OCI-LY7 (cell line): ENCODE measurements at regions of chr16 and their contacts with region 1.

Region 1: DNA sequence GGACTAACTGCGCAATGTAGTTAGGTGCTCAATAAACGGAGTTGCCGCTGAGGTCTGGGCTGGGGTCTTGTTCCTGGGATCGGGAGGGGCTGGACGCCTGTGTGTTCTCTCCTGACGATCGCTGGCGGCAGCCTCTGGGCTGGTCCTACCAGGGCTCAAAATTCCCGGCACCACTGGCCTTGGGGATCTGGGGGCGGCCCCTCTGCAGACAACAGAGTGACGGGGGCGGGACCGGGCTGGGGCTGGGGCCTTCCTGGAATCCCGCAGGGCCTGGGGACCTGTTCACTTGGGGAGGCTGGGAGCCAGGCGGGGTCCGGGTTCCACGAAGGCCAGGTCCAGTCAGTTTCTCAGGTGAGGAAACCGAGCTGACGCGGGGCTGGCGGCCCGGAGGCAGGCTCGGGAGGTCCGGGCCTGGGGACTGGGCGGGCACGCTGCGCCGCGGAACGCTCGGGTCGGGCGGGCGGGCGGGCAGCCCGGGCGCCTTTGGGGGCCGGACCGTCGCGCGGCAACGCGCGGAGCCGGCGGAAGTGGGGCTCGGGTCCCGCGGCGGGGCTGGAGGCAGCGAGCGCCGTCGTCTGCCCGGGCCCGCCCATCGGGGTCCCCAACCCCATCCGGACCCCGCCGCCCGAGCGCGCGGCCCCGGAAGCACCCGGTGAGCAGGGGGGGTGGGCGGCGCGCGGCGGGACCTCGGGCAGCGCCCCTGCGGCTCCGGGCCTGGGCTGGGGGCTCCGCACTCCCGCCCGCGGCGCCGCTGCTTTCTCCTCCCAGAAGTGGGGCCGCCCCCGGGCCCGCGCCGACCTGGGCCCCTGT is at the start of gene PIGQ:
- DNase-seq: peak; percentile 79
- H3K4me3 ChIP-seq: peak within 1 kb of the TSS; percentile 94
- H3K27ac ChIP-seq: peak within 1 kb of the TSS; percentile 22
- H3K4me1 ChIP-seq: peaks cover 35% of the 10 kb centered on the region
- CTCF ChIP-seq: no peak
- total RNA-seq, gene PIGQ: 32.3 and 39.0 TPM in 2 replicates

Region 2: DNA sequence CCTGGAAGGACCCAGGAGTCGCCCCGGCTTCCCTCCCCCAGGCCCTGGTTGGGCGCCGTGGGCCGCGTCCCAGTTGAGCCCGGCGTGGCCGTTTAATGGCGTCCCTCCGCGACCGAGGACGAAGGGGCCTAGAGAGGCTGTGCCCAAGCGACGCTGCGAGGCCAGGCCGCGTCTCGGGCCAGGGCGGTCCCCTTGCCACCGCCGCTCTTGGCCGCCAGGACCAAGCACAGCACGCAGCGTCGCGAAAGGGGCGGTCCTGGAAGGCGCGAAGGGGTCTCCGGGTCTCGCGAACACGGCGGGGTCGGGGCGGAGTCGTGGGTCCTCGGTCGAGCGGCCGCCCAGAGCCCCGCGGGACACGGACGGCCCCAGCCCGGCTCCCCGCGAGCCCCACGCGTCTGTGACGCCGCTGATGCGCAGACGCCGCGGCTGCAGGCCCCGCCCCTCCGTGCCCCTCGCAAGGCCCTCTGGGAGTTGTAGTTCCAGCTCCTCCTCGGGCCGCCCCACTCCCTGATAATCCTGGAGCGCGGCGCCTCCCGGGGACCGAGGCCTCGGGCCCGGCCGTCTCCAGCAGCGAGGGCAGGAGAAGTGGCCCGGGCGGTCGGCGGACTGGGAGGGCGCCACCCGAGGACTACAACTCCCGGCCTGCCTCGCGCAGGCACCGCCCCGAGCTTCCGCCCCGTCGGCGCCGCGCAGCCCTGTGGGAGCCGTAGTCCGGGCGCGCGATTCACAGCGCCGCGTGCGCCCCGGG is 42.5 kb before region 1 on chr16 and contains the start of gene CAPN15:
- CTCF ChIA-PET with region 1: no interaction called
- POLR2A ChIA-PET with region 1: no interaction called
- intact Hi-C with region 1: loop called (anchors 1 kb)
- DNase-seq: peak; percentile 92
- H3K4me3 ChIP-seq: peak within 1 kb of the TSS; percentile 92
- H3K27ac ChIP-seq: peak within 1 kb of the TSS; percentile 49
- H3K4me1 ChIP-seq: peaks cover 24% of the 10 kb centered on the region
- CTCF ChIP-seq: no peak
- total RNA-seq, gene CAPN15: 23.1 and 32.9 TPM in 2 replicates

Region 3: DNA sequence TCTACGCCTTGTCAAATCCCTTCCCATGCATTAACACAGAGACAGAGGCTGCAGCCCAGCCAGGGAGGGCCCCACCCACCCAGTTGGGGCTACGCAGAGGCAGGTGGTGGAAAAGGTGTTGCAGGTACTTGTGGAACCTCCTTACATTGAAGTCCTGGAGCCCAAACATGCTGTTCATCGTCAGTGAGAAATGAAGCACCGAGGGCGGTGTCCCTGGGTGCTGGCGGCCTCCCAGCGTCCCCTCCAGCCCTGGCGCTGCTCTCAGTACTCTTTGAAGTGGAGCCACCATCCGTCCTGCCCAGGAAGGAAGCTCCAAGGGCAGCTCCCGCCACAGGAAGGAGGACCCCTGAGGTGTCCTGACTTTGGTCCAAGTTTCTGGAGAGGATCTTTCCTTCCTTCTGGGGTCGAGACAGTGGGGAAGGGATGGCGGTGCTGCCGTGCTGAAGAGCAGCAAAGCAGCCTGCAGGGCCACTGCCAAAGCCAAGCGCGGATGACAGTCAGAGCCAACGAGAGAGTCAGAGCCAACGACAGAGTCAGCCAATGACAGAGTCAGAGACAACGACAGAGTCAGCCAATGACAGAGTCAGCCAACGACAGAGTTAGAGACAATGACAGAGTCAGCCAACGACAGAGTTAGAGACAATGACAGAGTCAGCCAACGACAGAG is 377.7 kb after region 1 on chr16:
- CTCF ChIA-PET with region 1: no interaction called
- POLR2A ChIA-PET with region 1: no interaction called
- intact Hi-C with region 1: no loop called
- DNase-seq: no peak
- H3K4me3 ChIP-seq: no peak overlapping the region
- H3K27ac ChIP-seq: no peak overlapping the region
- H3K4me1 ChIP-seq: no peaks in the 10 kb centered on the region
- CTCF ChIP-seq: no peak